Endothelial cell of umbilical vein (primary cell): ENCODE measurements at regions of chr17 and their contacts with region 1.

Region 1: GRCh38 chr17:73613271-73614233 is 30.7 kb downstream of the SDK2 start:
- DNase-seq: no peak
- H3K4me3 ChIP-seq: no peak overlapping the region
- H3K27ac ChIP-seq: no peak overlapping the region
- H3K4me1 ChIP-seq: no peaks in the 10 kb centered on the region
- H3K27me3 ChIP-seq: no peaks in the 10 kb centered on the region
- CTCF ChIP-seq: no peak
- POLR2A ChIP-seq: no peak

Region 2: DNA sequence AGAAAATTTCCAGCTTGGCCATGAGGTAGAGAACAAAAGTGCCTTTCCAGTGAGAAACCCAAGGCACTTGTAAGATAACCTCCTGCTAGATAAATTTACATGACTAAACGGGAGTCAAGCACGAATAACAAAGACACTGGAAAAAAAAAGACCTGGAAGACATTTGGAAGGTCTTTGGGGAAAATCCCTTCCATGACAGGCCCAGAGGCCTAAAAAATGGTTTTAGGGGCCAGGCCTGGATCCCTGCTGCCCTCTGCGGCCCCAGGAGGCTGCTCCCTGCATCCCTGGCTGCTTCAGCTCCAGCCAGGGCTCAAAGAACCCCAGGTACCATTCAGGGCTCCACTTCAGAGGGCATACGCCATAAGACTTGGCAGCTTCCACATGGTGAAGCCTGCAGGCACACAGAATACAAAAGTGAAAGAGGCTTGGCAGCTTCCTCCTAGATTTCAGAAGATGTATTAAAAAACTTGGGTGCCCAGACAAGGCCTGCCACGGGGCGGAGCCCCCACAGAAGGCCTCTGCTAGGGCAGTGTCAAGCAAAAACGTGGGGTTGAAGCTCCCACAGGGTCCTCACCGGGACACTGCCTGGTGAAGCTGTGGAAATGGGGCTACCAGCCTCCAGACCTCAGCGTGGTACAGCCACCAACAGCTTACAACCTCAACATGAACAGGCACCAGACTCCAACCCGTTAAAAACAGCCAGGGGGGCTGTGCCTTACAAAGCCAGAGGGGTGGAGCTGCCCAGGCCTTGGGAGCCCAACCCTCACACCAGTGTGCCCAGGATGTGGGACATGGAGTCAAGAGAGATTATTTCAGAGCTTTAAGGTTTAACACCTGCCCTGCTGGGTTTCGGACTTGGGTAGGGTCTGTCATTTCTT is 46.4 kb before region 1 on chr17:
- CTCF ChIA-PET with region 1: no interaction called
- POLR2A ChIA-PET with region 1: no interaction called
- dilution Hi-C with region 1: no loop called
- intact Hi-C with region 1: loop called (anchors 10 kb)
- DNase-seq: no peak
- H3K4me3 ChIP-seq: no peak overlapping the region
- H3K27ac ChIP-seq: no peak overlapping the region
- H3K4me1 ChIP-seq: no peaks in the 10 kb centered on the region
- H3K27me3 ChIP-seq: no peaks in the 10 kb centered on the region
- CTCF ChIP-seq: no peak
- POLR2A ChIP-seq: no peak